OCI-LY7 (cell line): ENCODE measurements at regions of chr7 and their contacts with region 1.

Region 1: GRCh38 chr7:2939193-2939885 is 95.2 kb upstream of the GNA12 start:
- DNase-seq: no peak
- H3K4me3 ChIP-seq: no peak overlapping the region
- H3K27ac ChIP-seq: no peak overlapping the region
- H3K4me1 ChIP-seq: no peaks in the 10 kb centered on the region
- CTCF ChIP-seq: no peak

Region 2: GRCh38 chr7:2886900-2887299 is 52.4 kb before region 1 on chr7:
- CTCF ChIA-PET with region 1: no interaction called
- POLR2A ChIA-PET with region 1: no interaction called
- intact Hi-C with region 1: no loop called
- DNase-seq: peak; percentile 84
- H3K4me3 ChIP-seq: no peak overlapping the region
- H3K27ac ChIP-seq: no peak overlapping the region
- H3K4me1 ChIP-seq: peaks cover 27% of the 10 kb centered on the region
- CTCF ChIP-seq: peak; percentile 95

Region 3: DNA sequence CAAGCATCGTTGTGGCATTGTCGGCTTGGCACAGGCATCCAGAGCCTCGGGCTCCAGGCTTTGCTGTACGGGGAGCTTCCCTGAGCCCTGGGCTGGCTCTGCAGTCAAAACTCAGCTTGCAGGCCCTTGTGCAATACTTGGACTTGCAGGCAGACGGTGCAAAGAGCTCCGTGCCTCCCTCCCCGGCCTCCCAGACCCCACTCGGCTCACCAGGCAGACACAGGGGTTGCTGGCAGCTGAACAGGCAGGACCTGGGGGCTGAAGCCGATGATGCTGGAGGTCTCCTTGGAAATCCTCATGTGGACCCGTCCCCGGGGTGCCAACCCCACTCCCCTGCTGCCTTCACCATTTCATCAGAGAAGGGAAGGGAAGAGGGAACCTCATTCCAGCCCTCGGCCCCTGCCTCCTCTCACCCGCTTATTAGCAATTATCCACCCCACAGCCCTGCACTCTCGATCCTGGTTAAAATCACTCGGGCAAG is 35.6 kb before region 1 on chr7:
- CTCF ChIA-PET with region 1: interaction called, 14 read pairs
- POLR2A ChIA-PET with region 1: no interaction called
- intact Hi-C with region 1: no loop called
- DNase-seq: no peak
- H3K4me3 ChIP-seq: no peak overlapping the region
- H3K27ac ChIP-seq: no peak overlapping the region
- H3K4me1 ChIP-seq: peaks cover 18% of the 10 kb centered on the region
- CTCF ChIP-seq: no peak

Region 4: DNA sequence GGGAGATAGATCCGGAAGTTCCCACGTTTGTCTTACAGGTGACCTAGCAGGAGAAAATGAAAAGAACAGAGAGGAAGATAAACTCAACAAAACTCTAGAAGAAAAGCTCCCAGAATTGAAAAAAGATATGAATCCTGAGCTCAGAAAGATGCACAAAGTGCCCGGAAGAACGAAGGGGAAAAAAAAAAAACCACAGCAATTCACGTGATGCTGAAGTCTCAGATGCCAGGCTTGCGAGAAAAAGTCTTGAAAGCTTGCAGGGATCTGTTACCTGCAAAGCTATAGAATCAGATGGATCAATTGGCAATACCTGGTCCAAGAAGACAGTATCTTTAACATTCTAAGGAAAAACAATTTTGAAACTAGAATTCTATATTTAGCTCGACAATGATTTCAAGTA is 70.8 kb after region 1 on chr7:
- CTCF ChIA-PET with region 1: no interaction called
- POLR2A ChIA-PET with region 1: interaction called, 11 read pairs
- intact Hi-C with region 1: no loop called
- DNase-seq: no peak
- H3K4me3 ChIP-seq: no peak overlapping the region
- H3K27ac ChIP-seq: no peak overlapping the region
- H3K4me1 ChIP-seq: peaks cover 9% of the 10 kb centered on the region
- CTCF ChIP-seq: no peak

Region 5: DNA sequence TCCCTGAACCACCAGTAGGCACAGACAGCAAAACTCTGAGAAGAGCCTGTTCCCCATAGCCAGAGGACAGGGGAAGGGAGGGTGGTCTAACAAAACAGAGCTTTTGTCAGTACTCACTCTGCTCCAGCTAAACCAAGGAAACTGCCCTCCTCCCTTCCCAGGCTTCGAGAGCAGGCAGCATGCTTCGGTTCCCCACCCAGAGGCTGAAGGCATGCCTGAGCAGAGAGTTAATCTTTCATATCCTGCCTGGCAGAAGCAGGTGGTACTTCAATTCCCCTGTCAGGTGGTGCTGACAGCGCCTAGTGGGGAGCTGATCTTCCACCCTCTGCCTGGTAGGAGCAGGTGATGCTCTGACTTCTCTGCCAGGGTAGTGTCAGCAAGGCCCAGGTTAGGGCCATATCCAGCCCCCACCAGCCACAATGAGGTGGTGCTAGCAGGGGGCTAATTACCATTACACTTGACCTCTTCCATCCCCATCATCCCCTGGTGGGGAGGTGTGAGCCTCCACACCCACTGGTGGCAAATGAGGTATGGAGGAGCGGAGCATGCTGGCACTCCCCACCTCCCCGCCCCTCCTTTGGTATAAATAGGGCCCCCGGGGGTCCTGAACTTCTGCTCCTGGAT is 396.8 kb after region 1 on chr7:
- CTCF ChIA-PET with region 1: no interaction called
- POLR2A ChIA-PET with region 1: no interaction called
- intact Hi-C with region 1: no loop called
- DNase-seq: no peak
- H3K4me3 ChIP-seq: no peak overlapping the region
- H3K27ac ChIP-seq: no peak overlapping the region
- H3K4me1 ChIP-seq: no peaks in the 10 kb centered on the region
- CTCF ChIP-seq: no peak